GM10248 (cell line): ENCODE measurements at regions of chr12 and their contacts with region 1.

Region 1: DNA sequence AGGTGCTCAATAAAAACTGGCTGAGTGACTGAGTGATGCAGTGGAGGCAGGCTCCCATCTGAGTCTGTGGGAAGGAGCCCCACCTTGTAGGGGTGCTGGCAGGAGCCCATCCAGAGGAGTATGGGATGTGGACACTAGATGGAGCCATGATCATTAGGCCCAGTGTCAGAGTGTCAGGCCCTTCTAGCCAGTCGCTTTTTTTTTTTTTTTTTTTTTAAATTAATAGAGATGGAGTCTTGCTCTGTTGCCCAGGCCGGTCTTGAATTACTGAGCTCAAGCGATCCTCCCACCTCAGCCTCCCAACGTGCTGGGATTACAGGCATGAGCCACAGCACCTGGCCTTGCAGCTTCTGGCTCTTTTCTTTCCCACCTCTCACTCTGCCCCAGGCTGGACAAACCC is 11.5 kb downstream of the RITA1 start:
- DNase-seq: peak; percentile 89
- CTCF ChIP-seq: peak; percentile 77

Region 2: DNA sequence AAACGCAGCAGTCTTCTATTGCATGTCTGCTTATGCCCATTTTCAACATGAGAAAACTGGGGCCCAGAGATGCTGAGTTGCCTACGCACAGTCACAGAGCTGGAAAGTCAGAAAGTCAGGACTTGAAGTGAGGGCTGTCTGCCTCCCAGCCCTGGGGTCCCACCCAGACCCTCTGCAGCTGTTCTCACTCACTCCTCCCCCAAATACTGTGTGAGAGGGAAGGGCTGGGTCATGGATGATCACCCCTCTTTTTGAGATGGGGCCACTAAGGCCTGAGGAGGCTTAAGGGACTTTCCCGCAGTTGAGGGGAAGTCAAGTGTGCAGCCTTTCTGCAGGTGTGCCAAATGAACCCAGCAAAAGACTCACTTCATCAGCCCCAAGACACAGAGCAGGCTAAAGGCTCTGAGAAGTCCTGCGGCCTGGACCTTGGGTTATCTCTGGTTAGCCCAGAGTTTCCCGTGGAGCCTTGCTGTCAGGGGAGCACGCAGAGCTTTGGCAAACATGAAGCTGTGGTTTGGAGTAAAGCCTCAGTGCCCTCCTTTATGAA is 121.8 kb before region 1 on chr12:
- CTCF ChIA-PET with region 1: no interaction called
- POLR2A ChIA-PET with region 1: no interaction called
- DNase-seq: peak; percentile 84
- CTCF ChIP-seq: no peak

Region 3: DNA sequence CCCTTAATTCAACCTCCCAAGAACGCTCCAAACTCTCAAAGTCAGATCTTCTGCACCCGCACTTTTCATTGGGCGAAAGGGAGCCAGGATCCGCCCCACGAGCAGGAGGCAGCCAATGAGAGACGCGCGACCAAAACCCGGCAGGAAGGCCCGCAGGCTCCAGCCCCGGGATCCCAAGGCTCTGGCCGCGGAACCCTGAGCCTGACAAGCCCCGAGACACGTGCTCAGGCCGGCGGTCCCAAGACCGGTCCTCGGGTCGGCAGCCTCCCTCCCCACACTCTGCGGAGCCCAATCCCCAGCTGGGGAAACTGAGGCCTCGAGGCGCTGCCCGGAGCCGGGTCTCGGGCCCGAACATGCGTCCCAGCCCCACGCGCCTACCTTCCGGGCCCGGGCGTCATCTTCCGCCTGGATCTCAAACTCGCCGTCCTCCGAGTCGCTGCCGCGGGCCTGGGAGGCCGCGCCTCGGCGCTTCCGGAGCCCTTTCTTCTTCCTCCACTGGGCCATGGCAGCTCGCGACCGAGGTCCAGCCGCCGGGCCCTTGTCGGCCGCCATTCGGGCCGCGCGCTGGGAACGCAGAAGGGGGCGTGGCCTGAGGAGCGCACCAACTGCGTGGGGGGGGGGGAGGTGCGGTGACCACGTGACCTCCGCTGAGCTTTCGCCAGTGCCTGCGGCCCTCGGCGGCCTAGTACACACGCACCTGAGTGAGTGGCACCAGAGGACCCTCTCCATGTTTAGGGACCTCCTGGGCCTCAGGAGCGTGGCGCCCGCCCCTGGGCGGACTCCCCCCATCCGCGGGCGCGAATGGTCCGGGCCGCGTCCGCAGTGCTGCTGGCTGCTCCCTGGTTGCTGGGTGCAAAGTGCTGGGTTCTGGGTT is 11.9 kb before region 1 on chr12 and contains the starts of genes DDX54 and RITA1:
- CTCF ChIA-PET with region 1: interaction called, 11 read pairs
- POLR2A ChIA-PET with region 1: interaction called, 3 read pairs
- DNase-seq: peak; percentile 93
- CTCF ChIP-seq: no peak